Spleen (tissue), 13 donors: ENCODE measurements at regions of chr1 and their contacts with region 1.

Region 1: GRCh38 chr1:199113265-199113869 is 474.5 kb downstream of the PTPRC start:
- DNase-seq: peak; percentile 85
- H3K4me3 ChIP-seq: no peak overlapping the region
- H3K27ac ChIP-seq: no peak overlapping the region
- H3K4me1 ChIP-seq: no peaks in the 10 kb centered on the region
- H3K27me3 ChIP-seq: no peaks in the 10 kb centered on the region
- CTCF ChIP-seq: peak; percentile 50 to 84 (median 70)
- POLR2A ChIP-seq: no peak

Region 2: GRCh38 chr1:198756470-198756869 is 356.9 kb before region 1 on chr1:
- intact Hi-C with region 1: loop called (anchors 10 kb)
- DNase-seq: no peak
- H3K4me3 ChIP-seq: no peak overlapping the region
- H3K27ac ChIP-seq: no peak overlapping the region
- H3K4me1 ChIP-seq: peaks cover 0 to 28% (median 3%) of the 10 kb centered on the region in 6 donors
- H3K27me3 ChIP-seq: no peaks in the 10 kb centered on the region
- CTCF ChIP-seq: peak in 3 of 11 experiments; percentile 8 to 18 (median 10)
- POLR2A ChIP-seq: no peak

Region 3: GRCh38 chr1:199512037-199512710 is 398.8 kb after region 1 on chr1:
- intact Hi-C with region 1: no loop called
- DNase-seq: no peak
- H3K4me3 ChIP-seq: no peak overlapping the region
- H3K27ac ChIP-seq: no peak overlapping the region
- H3K4me1 ChIP-seq: no peaks in the 10 kb centered on the region
- H3K27me3 ChIP-seq: no peaks in the 10 kb centered on the region
- CTCF ChIP-seq: no peak
- POLR2A ChIP-seq: no peak

Region 4: DNA sequence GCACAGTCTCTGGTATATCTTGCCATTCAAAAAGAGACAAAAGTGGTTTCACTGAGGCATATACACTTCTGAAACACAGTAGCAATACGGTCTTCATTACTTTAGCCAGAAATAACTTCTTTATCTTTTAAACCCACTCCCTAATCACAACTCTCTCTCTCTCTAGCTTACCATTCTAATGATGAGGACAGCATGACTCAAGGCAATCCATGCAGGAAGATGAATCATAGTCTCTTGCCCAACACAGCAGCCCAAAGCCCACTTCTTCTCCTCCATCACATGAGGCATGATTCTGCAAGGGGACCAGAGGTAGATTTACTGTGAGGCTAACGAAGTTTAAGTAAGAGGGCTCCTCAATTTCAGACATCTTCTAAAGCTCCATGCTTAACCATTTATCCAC is 629.2 kb after region 1 on chr1:
- intact Hi-C with region 1: no loop called
- DNase-seq: no peak
- H3K4me3 ChIP-seq: no peak overlapping the region
- H3K27ac ChIP-seq: no peak overlapping the region
- H3K4me1 ChIP-seq: no peaks in the 10 kb centered on the region
- H3K27me3 ChIP-seq: no peaks in the 10 kb centered on the region
- CTCF ChIP-seq: no peak
- POLR2A ChIP-seq: no peak